ENCODE measurements at regions of chr1 and their contacts with region 1.

Region 1: DNA sequence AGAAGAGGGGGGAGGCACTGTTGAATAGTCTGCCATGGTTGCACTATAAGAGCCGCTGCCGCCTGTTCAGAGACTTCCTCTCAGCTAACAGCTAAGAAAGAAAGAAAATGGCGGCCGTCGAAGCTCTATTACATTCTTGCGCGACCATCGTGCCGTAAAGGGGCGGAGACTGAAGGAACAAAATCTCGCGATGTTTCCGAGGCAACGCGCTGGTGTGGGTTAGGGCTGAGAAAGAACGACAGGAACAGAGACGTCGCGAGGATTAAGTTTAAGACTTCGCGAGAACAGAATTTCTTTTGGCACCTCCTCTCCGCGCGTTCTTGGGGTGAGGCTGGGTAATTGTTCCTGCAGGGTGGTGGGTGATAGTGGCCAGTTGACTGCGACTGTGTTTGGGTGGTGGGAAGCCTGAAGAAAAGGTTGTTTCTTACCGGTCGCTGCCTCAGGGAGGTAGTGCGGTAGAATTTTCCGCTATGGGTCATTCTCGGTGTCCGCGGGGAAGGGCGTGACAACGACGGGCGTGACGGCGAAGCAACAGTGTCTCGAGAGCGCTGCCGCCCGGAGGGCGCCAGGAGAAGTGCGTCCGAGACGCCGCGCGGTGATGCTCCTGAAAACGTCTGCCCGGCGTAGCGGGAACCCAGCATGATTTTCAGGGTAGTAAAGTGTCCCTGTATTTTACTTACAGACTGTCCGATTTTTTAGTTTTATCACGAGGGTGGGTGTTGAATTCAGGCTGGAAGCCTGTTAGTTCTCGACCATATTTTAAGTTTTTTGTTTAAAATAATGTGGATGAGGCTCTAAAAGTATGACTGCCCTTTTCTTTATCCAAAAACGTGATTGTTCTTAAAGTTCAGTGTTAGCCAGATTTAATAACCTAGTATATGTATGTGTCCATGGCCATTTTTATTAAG is at the start of gene FUBP1:
- DNase-seq: peak; percentile 95
- ATAC-seq: peak; percentile 94
- total RNA-seq, gene FUBP1: 47.9 TPM

Region 2: GRCh38 chr1:78045926-78046778 is 66.9 kb after region 1 on chr1 and contains the start of gene GIPC2:
- intact Hi-C with region 1: loop called (anchors 2 kb)
- DNase-seq: peak; percentile 58
- ATAC-seq: peak; percentile 74
- total RNA-seq, gene GIPC2: 2.0 TPM

Region 3: DNA sequence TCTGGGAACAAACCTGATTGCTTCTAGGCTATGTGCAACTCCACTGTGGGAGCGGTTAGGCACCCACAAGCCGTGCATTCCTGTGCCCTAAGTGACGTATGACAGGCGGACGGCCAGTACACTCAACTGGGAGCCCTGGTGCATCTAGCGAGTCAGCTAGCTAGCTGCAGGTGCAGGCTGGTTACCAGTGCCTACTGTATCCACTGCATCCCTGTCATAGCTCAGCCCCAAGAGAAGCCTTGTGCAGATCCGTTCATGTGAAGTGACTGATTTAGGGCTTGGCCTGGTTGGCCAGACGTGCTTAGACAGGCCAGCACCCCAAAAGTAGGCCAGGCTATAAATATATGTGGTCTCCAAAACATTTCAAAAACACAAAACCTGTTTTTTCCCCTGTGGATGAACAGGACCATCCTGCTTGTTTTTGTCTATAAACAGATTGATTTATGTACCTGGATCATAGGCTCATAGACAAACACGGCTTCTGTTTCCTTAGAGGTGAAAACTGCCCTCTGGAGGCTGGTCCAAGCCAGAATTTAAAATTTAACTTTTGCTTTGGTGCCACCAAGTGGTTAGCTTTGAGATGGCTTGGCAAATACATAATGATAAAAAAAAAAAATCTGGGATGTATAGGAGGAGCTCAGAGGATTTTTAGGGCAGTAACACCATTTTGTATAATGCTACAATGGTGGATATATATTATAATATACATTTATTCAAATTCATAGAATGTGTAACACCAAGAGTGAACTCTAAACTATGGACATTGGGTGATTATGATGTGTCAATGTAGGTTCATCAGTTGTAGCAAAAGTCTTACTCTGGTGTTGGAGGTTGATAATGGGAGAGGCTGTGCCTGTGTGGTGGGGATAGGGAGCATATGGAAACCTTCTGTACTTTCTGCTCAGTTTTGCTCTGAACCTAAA is 135.1 kb after region 1 on chr1:
- intact Hi-C with region 1: loop called (anchors 5 kb)
- DNase-seq: peak; percentile 44
- ATAC-seq: peak; percentile 89

Measured in Right ventricle myocardium superior (tissue), 1 donor.